ENCODE measurements at regions of chr10 and their contacts with region 1.

Region 1: DNA sequence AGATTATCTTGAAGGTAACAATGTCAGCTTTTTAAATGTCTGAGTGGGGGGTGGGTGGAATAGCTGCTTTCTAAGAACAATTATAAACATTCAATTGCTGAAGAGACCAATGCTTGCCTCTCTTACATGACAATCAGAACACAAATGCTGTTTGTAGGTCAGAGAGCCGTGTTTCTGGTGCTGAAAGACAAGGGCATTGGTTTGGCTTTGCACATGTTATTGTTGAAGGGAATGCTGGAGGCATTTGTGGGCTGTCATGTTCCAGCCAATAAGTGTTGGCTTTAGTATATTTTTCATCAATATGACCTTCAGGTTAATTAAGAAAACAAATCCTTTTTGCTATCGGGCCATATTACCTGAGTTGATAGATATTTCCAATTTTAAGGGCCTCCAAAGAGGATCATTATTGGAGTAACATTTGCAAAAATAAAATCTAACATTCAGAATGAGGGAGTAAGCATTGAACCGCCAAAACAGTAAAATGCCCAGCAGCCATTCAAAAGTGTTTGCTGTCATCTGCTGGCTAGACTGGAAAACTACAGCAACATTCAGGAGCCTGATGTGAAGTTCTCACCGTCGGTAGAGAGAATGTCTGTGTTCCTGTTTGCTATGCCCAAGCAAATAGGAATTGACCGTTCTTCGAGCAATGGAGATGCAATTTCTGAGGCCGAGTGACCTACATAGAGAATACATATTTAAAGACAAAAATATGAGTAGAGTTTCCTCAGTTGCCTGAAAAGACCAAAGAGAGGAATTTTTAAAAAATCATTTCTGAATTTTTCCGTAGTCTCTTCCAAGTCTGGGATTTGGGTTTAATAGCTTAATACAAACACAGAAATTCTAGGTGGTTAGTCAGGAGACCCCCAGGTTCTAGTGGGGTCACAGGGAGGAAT is 118.9 kb downstream of the APBB1IP start:
- DNase-seq: peak; percentile 24 to 56 (median 40)
- ATAC-seq: peak; percentile 74
- H3K4me3 ChIP-seq: no peak overlapping the region
- H3K27ac ChIP-seq: no peak overlapping the region
- H3K4me1 ChIP-seq: no peaks in the 10 kb centered on the region
- H3K27me3 ChIP-seq: peaks cover 3 to 11% of the 10 kb centered on the region in 2 experiments; a peak in 2 of 5 replicates
- CTCF ChIP-seq: peak; percentile 73 to 88 (median 76)
- EP300 ChIP-seq: no peak
- POLR2A ChIP-seq: no peak
- RAD21 ChIP-seq: peak; percentile 89 to 95

Region 2: DNA sequence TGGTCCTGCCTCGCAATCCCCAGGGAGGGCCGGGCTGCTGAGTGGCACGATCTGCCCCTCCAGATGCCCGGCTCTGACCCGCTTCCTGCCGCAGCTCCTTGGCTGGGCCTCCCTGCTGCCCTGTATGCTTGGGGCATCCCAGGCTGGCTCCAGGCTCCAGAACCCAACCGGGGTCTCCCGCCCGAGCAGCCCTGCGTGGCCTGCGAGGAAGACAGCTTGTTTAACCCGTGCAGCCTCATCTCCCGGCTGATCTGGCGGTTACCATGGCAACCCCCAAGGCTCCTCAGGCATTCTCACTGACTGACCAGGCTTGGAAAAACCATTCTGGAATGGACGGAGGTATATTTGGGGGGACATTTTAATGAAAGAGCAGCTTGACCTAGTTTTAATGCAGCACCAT is 855.3 kb before region 1 on chr10:
- CTCF ChIA-PET with region 1: no interaction called
- POLR2A ChIA-PET with region 1: no interaction called
- in situ Hi-C with region 1: loop called (anchors 25 kb)
- intact Hi-C with region 1: no loop called
- DNase-seq: no peak
- ATAC-seq: no peak
- H3K4me3 ChIP-seq: no peak overlapping the region
- H3K27ac ChIP-seq: no peak overlapping the region
- H3K4me1 ChIP-seq: peaks cover 3 to 4% of the 10 kb centered on the region in 2 experiments; a peak in 2 of 5 replicates
- H3K27me3 ChIP-seq: peaks cover 0 to 9% of the 10 kb centered on the region in 2 experiments; a peak in 1 of 5 replicates
- CTCF ChIP-seq: no peak
- EP300 ChIP-seq: no peak
- POLR2A ChIP-seq: no peak
- RAD21 ChIP-seq: no peak

Region 3: GRCh38 chr10:25725918-25726716 is 830.9 kb before region 1 on chr10:
- CTCF ChIA-PET with region 1: interaction called, 5 read pairs
- POLR2A ChIA-PET with region 1: no interaction called
- in situ Hi-C with region 1: loop called (anchors 25 kb)
- intact Hi-C with region 1: loop called (anchors 5 kb)
- DNase-seq: peak; percentile 36 to 71 (median 47)
- ATAC-seq: peak; percentile 84
- H3K4me3 ChIP-seq: no peak overlapping the region
- H3K27ac ChIP-seq: no peak overlapping the region
- H3K4me1 ChIP-seq: no peaks in the 10 kb centered on the region
- H3K27me3 ChIP-seq: peaks cover 0 to 3% of the 10 kb centered on the region in 2 experiments; a peak in 1 of 5 replicates
- CTCF ChIP-seq: peak; percentile 58 to 72 (median 62)
- EP300 ChIP-seq: no peak
- POLR2A ChIP-seq: no peak
- RAD21 ChIP-seq: peak; percentile 42 to 76

Region 4: DNA sequence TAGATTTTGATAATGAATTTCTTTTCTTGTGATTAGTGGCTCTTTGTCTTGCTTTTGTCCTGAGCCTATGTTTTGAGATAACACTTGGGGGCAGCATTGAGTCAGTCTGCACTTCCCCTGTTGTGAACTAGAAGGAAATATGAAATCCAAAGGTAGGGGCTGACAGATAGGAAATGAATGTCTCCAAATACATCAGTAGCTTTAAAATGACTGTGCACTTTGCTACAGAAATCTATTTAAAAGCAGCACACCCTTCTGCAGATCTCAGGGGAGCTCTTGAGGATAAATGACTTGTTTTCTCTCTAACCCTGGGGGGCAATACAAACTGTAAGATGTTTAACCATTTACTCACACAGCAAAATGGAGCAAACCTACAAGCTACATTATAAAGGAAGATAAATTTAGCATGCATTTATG is 798.9 kb before region 1 on chr10:
- CTCF ChIA-PET with region 1: no interaction called
- POLR2A ChIA-PET with region 1: no interaction called
- in situ Hi-C with region 1: no loop called
- intact Hi-C with region 1: loop called (anchors 10 kb)
- DNase-seq: peak; percentile 45 to 66 (median 53)
- ATAC-seq: peak; percentile 92
- H3K4me3 ChIP-seq: no peak overlapping the region
- H3K27ac ChIP-seq: no peak overlapping the region
- H3K4me1 ChIP-seq: peaks cover 0 to 4% of the 10 kb centered on the region in 2 experiments; a peak in 3 of 5 replicates
- H3K27me3 ChIP-seq: no peaks in the 10 kb centered on the region
- CTCF ChIP-seq: peak; percentile 62 to 81 (median 73)
- EP300 ChIP-seq: no peak
- POLR2A ChIP-seq: no peak
- RAD21 ChIP-seq: peak; percentile 75 to 78

Region 5: DNA sequence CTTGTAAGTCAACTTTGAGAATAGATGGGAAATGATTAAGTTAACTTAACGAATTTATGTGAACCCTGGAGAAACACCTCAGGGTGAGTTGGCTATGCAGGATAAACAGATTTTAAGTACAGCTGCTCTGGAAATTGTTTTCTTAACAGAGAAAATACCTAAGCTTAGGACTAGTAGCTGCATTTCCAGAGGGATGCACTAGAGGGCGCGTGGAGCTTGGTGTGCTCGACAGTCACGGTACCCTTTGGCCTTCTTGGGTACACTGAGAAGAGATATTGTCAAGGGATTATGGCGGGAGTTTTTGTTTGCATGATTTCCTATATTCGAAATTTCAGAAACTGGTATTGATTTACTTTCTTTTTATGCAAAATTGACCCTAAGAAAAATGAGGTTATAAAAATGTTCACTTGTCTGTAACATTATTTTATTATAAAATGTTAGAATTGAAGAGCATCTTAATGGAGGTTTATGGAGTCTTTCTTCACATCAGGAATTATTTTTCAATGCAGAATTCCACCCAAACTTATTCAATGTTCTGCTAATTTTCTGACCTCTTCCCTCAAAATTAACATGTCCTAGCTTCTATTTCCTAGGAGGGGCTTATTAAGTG is 681.3 kb before region 1 on chr10:
- CTCF ChIA-PET with region 1: no interaction called
- POLR2A ChIA-PET with region 1: no interaction called
- in situ Hi-C with region 1: no loop called
- intact Hi-C with region 1: loop called (anchors 5 kb)
- DNase-seq: peak; percentile 54 to 76 (median 62)
- ATAC-seq: peak; percentile 86
- H3K4me3 ChIP-seq: no peak overlapping the region
- H3K27ac ChIP-seq: no peak overlapping the region
- H3K4me1 ChIP-seq: no peaks in the 10 kb centered on the region
- H3K27me3 ChIP-seq: no peaks in the 10 kb centered on the region
- CTCF ChIP-seq: peak; percentile 72 to 85 (median 83)
- EP300 ChIP-seq: no peak
- POLR2A ChIP-seq: no peak
- RAD21 ChIP-seq: peak; percentile 55 to 77

Region 6: GRCh38 chr10:26334932-26335573 is 221.9 kb before region 1 on chr10:
- CTCF ChIA-PET with region 1: interaction called, 8 read pairs
- POLR2A ChIA-PET with region 1: no interaction called
- in situ Hi-C with region 1: loop called (anchors 10 kb)
- intact Hi-C with region 1: loop called (anchors 1 kb)
- DNase-seq: peak; percentile 42 to 64 (median 48)
- ATAC-seq: peak; percentile 78
- H3K4me3 ChIP-seq: no peak overlapping the region
- H3K27ac ChIP-seq: no peak overlapping the region
- H3K4me1 ChIP-seq: no peaks in the 10 kb centered on the region
- H3K27me3 ChIP-seq: no peaks in the 10 kb centered on the region
- CTCF ChIP-seq: peak; percentile 48 to 75 (median 70)
- EP300 ChIP-seq: no peak
- POLR2A ChIP-seq: no peak
- RAD21 ChIP-seq: peak; percentile 49 to 87; a peak in 3 of 4 replicates

Region 7: DNA sequence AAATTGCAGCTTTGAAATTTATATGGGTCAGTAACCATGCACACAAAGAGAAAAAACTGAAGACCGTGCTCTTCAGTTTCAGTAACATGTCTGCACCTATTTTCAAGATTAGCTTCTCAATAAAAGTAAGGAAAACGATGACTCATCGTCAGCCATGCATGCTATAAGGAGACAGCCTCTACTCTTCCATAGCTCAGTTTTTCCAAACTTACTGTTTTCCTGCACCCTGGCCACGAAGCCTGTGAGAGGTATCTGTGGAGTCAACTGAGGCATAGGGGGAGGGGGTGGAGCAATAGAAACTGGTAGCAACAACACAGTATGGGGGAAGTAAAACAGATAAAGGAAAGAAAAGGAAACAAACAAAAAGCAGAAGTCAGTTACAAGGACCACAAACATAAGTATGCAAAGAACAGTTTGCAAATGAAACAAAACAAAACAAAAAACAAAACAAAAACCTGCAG is 198.5 kb after region 1 on chr10:
- CTCF ChIA-PET with region 1: no interaction called
- POLR2A ChIA-PET with region 1: no interaction called
- in situ Hi-C with region 1: no loop called
- intact Hi-C with region 1: no loop called
- DNase-seq: peak in 2 of 4 experiments; percentile 17 to 33
- ATAC-seq: peak; percentile 54
- H3K4me3 ChIP-seq: no peak overlapping the region
- H3K27ac ChIP-seq: peak overlapping the region; percentile 49; the same call in 2 of the 3 replicates
- H3K4me1 ChIP-seq: peaks cover 0 to 6% of the 10 kb centered on the region in 2 experiments; a peak in 3 of 5 replicates
- H3K27me3 ChIP-seq: no peaks in the 10 kb centered on the region
- CTCF ChIP-seq: no peak
- EP300 ChIP-seq: no peak
- POLR2A ChIP-seq: no peak
- RAD21 ChIP-seq: no peak

Region 8: DNA sequence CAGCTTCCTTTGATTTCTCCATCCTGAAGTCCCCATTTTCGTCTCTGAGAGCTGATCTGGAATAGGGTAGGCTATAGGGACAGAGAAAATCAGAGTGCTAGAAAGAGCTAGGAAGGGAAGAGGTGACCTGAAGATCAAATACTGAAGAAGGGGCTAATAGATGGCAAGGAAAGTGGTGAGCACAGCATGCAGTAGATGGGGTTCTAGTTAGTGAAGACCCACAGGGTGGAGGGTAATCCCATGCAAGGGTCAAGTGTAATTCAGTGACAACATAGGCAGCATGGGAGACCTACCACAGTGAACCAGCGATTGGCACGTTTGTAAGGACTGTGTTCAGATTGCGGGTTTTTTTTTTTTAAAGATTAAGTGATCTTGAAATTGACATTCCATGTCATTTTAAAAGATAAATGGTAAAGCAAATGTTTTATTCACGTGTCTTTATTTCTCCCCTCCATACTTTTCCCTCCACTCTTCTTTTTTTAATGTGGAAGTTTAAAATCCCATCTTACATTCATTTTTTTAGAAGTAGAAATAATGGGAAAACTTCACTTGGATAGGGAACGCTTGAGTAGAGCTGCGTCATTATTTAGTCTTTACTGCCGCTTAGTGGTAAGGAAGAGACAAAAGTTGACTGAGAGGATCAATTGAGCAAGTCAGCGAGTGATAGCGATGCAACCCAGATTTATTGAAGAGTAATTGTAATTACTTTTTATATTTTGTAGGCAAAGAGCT is 324.8 kb after region 1 on chr10:
- CTCF ChIA-PET with region 1: no interaction called
- POLR2A ChIA-PET with region 1: no interaction called
- in situ Hi-C with region 1: no loop called
- intact Hi-C with region 1: loop called (anchors 5 kb)
- DNase-seq: peak; percentile 23 to 61 (median 31)
- ATAC-seq: peak; percentile 92
- H3K4me3 ChIP-seq: no peak overlapping the region
- H3K27ac ChIP-seq: no peak overlapping the region
- H3K4me1 ChIP-seq: no peaks in the 10 kb centered on the region; a peak in 1 of 5 replicates
- H3K27me3 ChIP-seq: peaks cover 3 to 27% of the 10 kb centered on the region in 2 experiments; a peak in 3 of 5 replicates
- CTCF ChIP-seq: peak; percentile 74 to 91 (median 76)
- EP300 ChIP-seq: no peak
- POLR2A ChIP-seq: no peak
- RAD21 ChIP-seq: peak; percentile 86 to 94